Heart right ventricle (tissue), 16 donors: ENCODE measurements at regions of chr5 and their contacts with region 1.

Region 1: DNA sequence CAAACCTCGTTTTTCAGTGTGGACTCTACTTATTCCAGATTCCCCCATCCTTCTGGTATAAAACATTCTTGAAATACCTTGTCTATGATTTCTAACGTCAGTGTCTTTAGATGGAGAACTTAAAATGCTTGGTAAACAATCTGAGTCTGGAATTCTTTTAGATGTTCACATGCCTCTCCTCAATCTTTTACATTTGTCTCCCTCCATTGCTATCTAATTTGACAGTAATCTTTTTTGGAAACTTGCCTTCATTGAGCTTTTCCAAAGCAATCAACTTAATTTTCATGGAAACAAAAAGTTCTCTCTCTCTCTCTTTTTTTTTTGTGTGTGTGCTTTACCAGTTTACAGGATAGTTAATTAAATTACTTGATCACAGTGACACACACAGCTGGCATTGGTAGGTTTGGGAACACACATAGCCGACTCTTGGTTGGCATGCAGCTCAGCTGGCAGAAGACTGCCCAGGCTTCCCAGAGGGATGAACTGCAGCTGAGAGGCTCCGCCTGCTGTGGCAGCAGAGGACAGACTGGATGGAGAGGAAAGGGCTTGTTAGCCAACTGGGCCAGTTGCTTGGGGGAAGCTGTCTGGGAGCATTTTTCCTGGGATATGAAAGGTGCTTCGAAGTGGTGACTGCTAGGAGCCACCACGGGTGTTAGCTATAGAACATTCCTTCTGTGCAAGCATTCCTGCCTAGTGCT is 271.3 kb downstream of the ZSWIM6 start:
- DNase-seq: peak; percentile 23 to 50
- ATAC-seq: peak; percentile 57 to 93 (median 79)
- H3K4me3 ChIP-seq: no peak overlapping the region
- H3K27ac ChIP-seq: no peak overlapping the region
- H3K4me1 ChIP-seq: peaks cover 0 to 28% (median 8%) of the 10 kb centered on the region in 9 donors
- H3K27me3 ChIP-seq: peaks cover 0 to 6% (median 0%) of the 10 kb centered on the region in 7 donors
- CTCF ChIP-seq: peak in 5 of 9 donors; percentile 18 to 49 (median 45)

Region 2: DNA sequence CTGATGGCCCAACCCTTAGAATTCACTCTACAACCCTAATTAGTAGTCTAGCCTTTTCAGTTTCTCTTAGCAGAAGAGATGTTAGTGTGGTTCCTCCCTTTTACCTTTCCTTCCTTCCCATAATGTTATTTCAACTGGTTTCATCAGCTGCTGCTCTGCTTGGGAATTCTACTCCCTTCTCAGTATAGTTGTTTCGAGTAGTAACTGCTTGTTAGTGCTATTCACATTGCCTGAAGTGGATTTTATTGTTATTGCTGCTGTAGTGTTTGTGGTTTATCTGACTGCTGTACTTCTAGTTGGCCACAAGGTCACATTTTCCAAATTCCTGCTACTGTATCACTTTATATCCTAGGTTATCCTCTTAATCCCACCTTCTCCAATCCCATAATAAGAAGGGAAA is 470.8 kb before region 1 on chr5:
- intact Hi-C with region 1: no loop called
- DNase-seq: no peak
- ATAC-seq: no peak
- H3K4me3 ChIP-seq: no peak overlapping the region
- H3K27ac ChIP-seq: no peak overlapping the region
- H3K4me1 ChIP-seq: no peaks in the 10 kb centered on the region
- H3K27me3 ChIP-seq: no peaks in the 10 kb centered on the region
- CTCF ChIP-seq: no peak

Region 3: DNA sequence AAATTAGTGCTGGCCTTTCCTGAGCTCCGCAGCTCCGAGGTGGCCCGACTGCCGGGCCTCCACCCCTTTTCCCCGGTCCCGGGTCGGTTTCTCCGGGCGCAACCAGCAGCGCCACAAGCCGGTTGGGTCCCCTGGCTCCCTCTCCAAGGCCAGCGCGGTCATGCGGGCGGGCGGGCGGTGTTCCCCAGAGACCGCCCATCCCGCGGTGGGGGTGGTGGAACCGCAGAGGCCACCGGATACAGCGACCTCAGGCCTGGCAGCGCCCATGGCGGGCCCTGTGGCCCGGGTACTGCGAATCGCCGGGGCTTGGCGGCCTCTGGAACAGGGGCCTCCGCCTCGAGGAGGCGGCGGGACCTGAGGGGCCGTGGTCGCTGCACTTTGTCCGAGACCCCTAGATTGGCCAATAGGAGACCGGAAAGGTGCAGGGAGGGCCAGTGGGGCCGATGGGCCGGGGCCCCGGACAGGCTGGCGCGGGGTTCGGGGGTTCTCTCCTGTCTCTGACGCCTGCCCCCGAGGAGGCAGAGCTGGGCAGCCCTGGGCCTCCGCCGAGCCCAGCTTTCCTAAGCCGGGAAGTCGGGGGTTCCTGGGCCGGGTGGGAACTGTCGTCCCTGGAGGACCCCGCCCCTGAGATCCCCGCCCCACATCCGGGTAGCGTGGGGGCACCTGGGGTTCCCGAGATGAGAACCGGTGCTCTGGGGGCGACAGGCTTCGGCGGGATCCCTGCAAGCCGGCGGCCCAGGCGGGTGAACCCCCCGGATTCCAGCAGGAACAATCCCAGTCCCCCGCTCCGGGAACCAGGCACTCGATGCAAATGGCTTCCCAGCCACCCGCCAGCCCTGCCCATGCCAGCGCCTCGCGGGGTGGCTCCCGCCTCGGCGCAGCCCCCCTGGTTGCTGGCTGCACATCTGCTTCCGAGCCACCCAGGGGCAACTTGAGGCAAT is 22.6 kb after region 1 on chr5:
- intact Hi-C with region 1: loop called in 1 of 10 experiments (anchors 1 kb)
- DNase-seq: peak; percentile 82 to 84
- ATAC-seq: peak; percentile 93 to 99 (median 97)
- H3K4me3 ChIP-seq: peak overlapping the region; percentile 44 to 73 (median 64)
- H3K27ac ChIP-seq: peak overlapping the region; percentile 73 to 97 (median 90)
- H3K4me1 ChIP-seq: peaks cover 4 to 28% (median 19%) of the 10 kb centered on the region in 9 donors
- H3K27me3 ChIP-seq: peaks cover 0 to 19% (median 0%) of the 10 kb centered on the region in 7 donors
- CTCF ChIP-seq: peak in 2 of 9 donors; percentile 19 to 20

Region 4: GRCh38 chr5:61658592-61659008 is 55.2 kb after region 1 on chr5:
- intact Hi-C with region 1: loop called in 1 of 10 experiments (anchors 2 kb)
- DNase-seq: peak; percentile 88
- ATAC-seq: peak; percentile 82 to 95 (median 92)
- H3K4me3 ChIP-seq: peak overlapping the region in 6 of 10 donors; percentile 1 to 35 (median 27)
- H3K27ac ChIP-seq: peak overlapping the region in 6 of 10 donors; percentile 25 to 62 (median 40)
- H3K4me1 ChIP-seq: peaks cover 0 to 8% (median 0%) of the 10 kb centered on the region in 9 donors
- H3K27me3 ChIP-seq: no peaks in the 10 kb centered on the region
- CTCF ChIP-seq: peak; percentile 88 to 97 (median 93)